Heart left ventricle (tissue), 16 donors: ENCODE measurements at regions of chr11 and their contacts with region 1.

Region 1: GRCh38 chr11:65615229-65615941 is at the start of gene PCNX3:
- DNase-seq: peak; percentile 100
- ATAC-seq: peak; percentile 86 to 90 (median 88)
- H3K4me3 ChIP-seq: peak within 1 kb of the TSS; percentile 89 to 100 (median 96)
- H3K27ac ChIP-seq: peak within 1 kb of the TSS; percentile 95 to 99 (median 97)
- H3K4me1 ChIP-seq: peaks cover 5 to 57% (median 34%) of the 10 kb centered on the region in 12 donors
- H3K27me3 ChIP-seq: no peaks in the 10 kb centered on the region
- CTCF ChIP-seq: no peak
- POLR2A ChIP-seq: peak in 1 of 2 donors; percentile 68
- total RNA-seq, gene PCNX3: 9.5 to 23.4 (median 15.4) TPM

Region 2: GRCh38 chr11:64826062-64826461 is 789.3 kb before region 1 on chr11:
- intact Hi-C with region 1: no loop called
- DNase-seq: no peak
- ATAC-seq: no peak
- H3K4me3 ChIP-seq: no peak overlapping the region
- H3K27ac ChIP-seq: no peak overlapping the region
- H3K4me1 ChIP-seq: no peaks in the 10 kb centered on the region
- H3K27me3 ChIP-seq: no peaks in the 10 kb centered on the region
- CTCF ChIP-seq: no peak
- POLR2A ChIP-seq: no peak

Region 3: DNA sequence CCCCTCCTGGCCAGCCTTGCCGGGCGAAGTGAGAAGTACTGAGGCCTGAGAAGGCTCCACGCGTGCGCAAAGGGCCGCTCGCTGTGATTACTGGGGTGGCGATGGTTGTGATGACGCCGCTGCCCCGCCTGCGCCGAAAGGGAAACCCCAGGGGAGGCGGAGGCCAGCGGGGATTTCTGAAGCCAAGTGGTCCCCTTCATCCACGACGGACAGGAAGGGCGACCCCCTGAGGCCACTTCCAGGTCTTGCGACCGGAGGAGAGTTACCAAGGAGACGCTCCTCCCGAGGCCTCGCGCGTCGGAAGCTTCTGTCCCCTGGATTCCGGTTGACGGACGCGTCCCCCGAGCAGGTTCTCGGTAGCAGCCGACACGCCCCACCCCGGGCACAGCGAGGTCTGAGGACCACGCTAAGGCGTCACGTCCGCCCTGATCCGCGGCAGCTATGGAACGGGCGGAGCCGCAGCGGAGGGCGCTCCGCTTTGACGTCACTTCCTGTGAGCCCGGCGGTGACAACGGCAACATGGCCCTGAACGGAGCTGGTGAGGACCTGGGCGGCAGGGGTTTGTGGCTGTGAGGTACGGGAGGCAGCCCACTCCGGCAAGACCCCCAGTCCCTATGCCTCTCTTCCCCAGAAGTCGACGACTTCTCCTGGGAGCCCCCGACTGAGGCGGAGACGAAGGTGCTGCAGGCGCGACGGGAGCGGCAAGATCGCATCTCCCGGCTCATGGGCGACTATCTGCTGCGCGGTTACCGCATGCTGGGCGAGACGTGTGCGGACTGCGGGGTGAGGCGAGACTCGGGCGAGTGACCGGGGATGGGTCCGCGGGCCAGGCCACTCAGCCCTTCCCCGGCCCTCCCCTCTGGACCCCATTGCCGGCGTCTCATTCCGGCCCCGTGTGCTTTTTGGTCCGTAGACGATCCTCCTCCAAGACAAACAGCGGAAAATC is 45.1 kb before region 1 on chr11 and contains the start of gene ZNRD2:
- intact Hi-C with region 1: loop called in 7 of 10 experiments (anchors 1 to 5 kb)
- DNase-seq: peak; percentile 98 to 99 (median 99)
- ATAC-seq: peak; percentile 85 to 92 (median 90)
- H3K4me3 ChIP-seq: peak within 1 kb of the TSS; percentile 56 to 96 (median 82)
- H3K27ac ChIP-seq: peak within 1 kb of the TSS; percentile 64 to 99 (median 95)
- H3K4me1 ChIP-seq: peaks cover 17 to 77% (median 55%) of the 10 kb centered on the region in 12 donors
- H3K27me3 ChIP-seq: peaks cover 0 to 6% (median 0%) of the 10 kb centered on the region in 9 donors
- CTCF ChIP-seq: peak in 11 of 12 donors; percentile 33 to 71 (median 55)
- POLR2A ChIP-seq: peak in 1 of 2 donors; percentile 72
- total RNA-seq, gene ZNRD2: 23.2 to 63.6 (median 33.9) TPM

Region 4: DNA sequence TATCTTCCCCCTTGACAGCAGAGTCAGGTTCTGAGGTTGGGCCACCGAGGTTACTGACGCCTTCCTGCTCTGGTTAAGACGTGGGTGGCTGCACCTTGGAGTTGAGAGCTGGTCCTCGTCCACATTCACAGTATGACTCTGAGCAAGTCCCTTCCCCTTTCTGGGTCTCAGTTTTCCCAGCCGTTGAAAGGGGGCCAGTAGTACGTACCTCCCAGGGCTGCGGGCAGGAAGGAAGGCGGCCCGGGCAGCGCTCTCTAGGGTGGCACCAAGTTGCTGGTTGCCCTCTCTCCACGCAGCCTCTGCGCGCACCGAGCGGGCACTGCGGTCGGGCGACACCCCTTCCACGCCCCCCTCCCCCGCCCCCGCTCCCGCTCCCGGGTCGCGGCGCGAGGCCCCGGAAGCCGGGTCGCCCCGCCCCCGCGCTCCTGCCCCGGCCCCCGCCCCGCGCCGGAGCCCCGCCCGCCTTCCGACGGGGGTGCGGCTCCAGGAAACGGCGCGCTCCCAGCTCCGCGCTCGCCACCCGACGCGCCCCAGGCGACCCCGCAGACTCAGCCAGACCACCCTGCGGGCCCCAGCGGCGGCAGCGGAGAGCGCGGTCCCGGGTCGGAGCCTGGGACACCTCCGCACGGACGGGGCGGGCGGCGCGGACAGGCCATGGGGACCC is 39.7 kb before region 1 on chr11 and contains the start of gene EHBP1L1:
- intact Hi-C with region 1: loop called in 7 of 10 experiments (anchors 1 to 5 kb)
- DNase-seq: peak; percentile 81 to 92 (median 84)
- ATAC-seq: peak in 3 of 4 donors; percentile 1 to 32 (median 12)
- H3K4me3 ChIP-seq: peak within 1 kb of the TSS; percentile 28 to 96 (median 79)
- H3K27ac ChIP-seq: peak within 1 kb of the TSS; percentile 89 to 99 (median 96)
- H3K4me1 ChIP-seq: peaks cover 17 to 77% (median 63%) of the 10 kb centered on the region in 12 donors
- H3K27me3 ChIP-seq: no peaks in the 10 kb centered on the region
- CTCF ChIP-seq: no peak
- POLR2A ChIP-seq: peak in 1 of 2 donors; percentile 38
- total RNA-seq, gene EHBP1L1: 37.4 to 144 (median 80.9) TPM

Region 5: GRCh38 chr11:65637794-65638317 is 22.5 kb after region 1 on chr11 and contains the start of gene SIPA1:
- intact Hi-C with region 1: loop called in 1 of 10 experiments (anchors 2 kb)
- DNase-seq: peak; percentile 85 to 91 (median 86)
- ATAC-seq: peak; percentile 70 to 86 (median 82)
- H3K4me3 ChIP-seq: peak within 1 kb of the TSS; percentile 47 to 95 (median 81)
- H3K27ac ChIP-seq: peak within 1 kb of the TSS; percentile 85 to 99 (median 94)
- H3K4me1 ChIP-seq: peaks cover 0 to 68% (median 39%) of the 10 kb centered on the region in 12 donors
- H3K27me3 ChIP-seq: no peaks in the 10 kb centered on the region
- CTCF ChIP-seq: peak in 11 of 12 donors; percentile 29 to 69 (median 56)
- POLR2A ChIP-seq: peak in 1 of 2 donors; percentile 93
- total RNA-seq, gene SIPA1: 17.0 to 63.3 (median 21.6) TPM

Region 6: DNA sequence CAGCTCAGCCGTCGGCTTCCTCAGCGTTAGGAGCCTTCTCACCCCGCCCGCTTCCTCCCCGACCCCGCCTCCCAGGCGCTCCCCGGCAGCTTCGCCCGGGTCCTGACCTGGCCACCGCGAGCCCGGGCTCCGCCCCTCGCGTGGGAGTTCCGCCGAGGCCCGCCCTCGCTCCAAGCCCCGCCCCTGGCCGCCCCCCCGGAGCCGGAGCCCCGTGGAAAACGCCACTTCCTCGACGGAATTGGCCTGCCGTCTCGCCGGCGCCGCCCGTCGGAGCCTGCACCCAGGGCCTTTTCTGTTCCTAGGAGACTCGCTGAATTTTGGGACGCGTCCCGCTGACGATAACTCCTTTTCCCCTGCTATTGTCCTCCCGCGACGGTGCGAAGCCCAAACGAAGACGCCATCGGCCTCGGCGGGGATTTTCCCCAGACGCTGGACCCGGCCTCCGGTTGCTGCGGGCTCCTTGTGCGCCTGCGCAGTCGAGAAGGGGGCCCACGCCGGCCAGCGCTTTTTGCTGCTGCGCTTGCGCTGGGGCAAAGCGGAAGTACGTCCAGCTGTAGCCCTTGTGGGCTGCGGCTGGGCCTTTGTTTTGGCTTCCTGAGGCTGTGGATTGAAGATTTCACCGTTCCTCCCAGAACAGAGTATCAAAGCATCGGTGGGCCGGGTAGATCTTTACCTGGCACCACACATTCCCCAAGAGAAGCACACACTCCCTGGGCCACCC is 37.3 kb after region 1 on chr11:
- intact Hi-C with region 1: loop called in 1 of 10 experiments (anchors 2 kb)
- DNase-seq: peak; percentile 96 to 98 (median 97)
- ATAC-seq: peak; percentile 82 to 93 (median 90)
- H3K4me3 ChIP-seq: peak overlapping the region; percentile 1 to 66 (median 60)
- H3K27ac ChIP-seq: peak overlapping the region; percentile 89 to 99 (median 96)
- H3K4me1 ChIP-seq: peaks cover 8 to 65% (median 40%) of the 10 kb centered on the region in 12 donors
- H3K27me3 ChIP-seq: no peaks in the 10 kb centered on the region
- CTCF ChIP-seq: peak in 2 of 12 donors; percentile 17 to 22
- POLR2A ChIP-seq: peak in 1 of 2 donors; percentile 72

Region 7: DNA sequence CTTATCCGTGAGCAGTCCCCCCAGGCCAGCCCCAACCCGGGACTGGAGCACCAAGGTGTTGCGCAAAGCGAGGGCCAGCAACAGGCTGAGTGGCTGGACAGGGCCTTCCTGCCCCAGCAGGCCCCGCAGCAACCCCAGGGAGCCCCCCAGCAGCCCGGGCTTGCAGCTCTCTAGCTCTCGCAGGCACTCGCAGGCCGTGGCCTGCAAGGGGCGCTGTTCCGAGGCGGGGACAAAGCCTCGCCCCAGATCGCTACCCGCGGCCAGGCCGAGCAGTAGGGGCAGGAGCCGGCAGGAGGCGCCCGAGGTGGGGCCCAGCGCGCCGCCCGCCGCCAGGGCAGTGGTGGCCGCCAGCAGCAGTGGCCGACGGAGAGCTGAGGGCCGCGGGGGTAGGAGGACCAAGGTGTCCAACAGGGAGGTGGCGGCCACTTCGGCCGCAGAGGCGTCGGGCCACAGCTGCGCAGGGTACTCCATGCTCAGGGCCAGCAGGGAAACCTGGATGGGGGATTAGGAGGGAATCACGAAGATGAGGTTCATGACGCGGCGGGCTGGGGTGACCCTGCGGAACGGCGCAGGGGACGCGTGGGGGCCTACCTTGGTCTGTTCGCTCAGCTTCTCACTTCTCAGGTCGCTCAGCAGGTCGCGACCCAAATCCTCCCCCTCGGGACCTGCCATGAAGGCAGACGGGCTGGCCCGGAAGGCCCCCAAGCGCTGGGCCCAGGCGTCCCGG is 164.6 kb after region 1 on chr11:
- intact Hi-C with region 1: loop called in 1 of 10 experiments (anchors 10 kb)
- DNase-seq: peak; percentile 72 to 92 (median 80)
- ATAC-seq: peak; percentile 47 to 92 (median 86)
- H3K4me3 ChIP-seq: peak overlapping the region; percentile 67 to 98 (median 87)
- H3K27ac ChIP-seq: peak overlapping the region in 11 of 12 donors; percentile 52 to 86 (median 73)
- H3K4me1 ChIP-seq: peaks cover 0 to 54% (median 12%) of the 10 kb centered on the region in 12 donors
- H3K27me3 ChIP-seq: peaks cover 0 to 6% (median 2%) of the 10 kb centered on the region in 9 donors
- CTCF ChIP-seq: peak; percentile 80 to 97 (median 93)
- POLR2A ChIP-seq: no peak

Region 8: DNA sequence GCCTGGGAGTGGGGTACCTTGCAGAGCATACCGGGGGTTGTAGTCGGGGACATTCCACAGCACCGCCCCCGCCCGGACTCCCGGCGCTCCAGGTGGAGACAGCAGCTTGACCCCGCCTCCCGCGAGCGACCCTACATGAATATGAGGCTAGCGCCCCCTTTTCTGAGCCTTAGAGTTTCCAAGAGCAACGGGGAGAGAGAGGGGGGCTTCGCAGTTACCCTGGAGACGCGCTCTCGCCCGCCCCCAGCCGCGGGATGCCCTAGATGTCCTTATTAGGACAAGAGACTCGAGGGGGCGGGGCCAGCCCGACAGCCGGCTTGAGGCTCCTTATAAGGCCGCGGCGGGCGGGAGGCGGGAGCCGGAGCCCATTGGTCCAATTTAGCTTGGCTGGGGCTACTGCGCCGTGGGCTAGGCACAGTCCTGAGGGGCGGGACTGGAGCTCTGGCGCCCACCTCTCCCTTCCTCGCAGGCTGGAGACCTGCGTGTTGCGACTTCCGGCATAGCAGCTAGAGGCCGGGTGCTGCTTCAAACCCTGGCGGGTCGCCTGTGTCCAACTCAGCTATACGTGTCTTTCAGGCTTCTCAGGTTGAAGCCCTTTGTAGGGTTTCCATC is 243.9 kb after region 1 on chr11:
- intact Hi-C with region 1: loop called in 1 of 10 experiments (anchors 5 kb)
- DNase-seq: peak; percentile 99 to 100 (median 99)
- ATAC-seq: peak; percentile 77 to 87 (median 83)
- H3K4me3 ChIP-seq: peak overlapping the region; percentile 74 to 100 (median 92)
- H3K27ac ChIP-seq: peak overlapping the region; percentile 94 to 99 (median 98)
- H3K4me1 ChIP-seq: peaks cover 0 to 57% (median 32%) of the 10 kb centered on the region in 12 donors
- H3K27me3 ChIP-seq: no peaks in the 10 kb centered on the region
- CTCF ChIP-seq: peak in 4 of 12 donors; percentile 7 to 42 (median 25)
- POLR2A ChIP-seq: peak; percentile 82 to 98